ENCODE measurements at regions of chr17 and their contacts with region 1.

Region 1: GRCh38 chr17:8222630-8223356 is 12.4 kb upstream of the AURKB start:
- DNase-seq: peak; percentile 94
- H3K4me3 Mint-ChIP-seq: peak overlapping the region; percentile 98
- H3K27ac Mint-ChIP-seq: peak overlapping the region; percentile 98
- H3K4me1 Mint-ChIP-seq: peaks cover 47% of the 10 kb centered on the region
- H3K27me3 Mint-ChIP-seq: peaks cover 14% of the 10 kb centered on the region

Region 2: GRCh38 chr17:8156246-8156992 is 66.4 kb before region 1 on chr17:
- CTCF ChIA-PET with region 1: interaction called, 3 read pairs
- POLR2A ChIA-PET with region 1: interaction called, 6 read pairs
- intact Hi-C with region 1: loop called (anchors 2 kb)
- DNase-seq: peak; percentile 100
- H3K4me3 Mint-ChIP-seq: no peak overlapping the region
- H3K27ac Mint-ChIP-seq: no peak overlapping the region
- H3K4me1 Mint-ChIP-seq: peaks cover 56% of the 10 kb centered on the region
- H3K27me3 Mint-ChIP-seq: no peaks in the 10 kb centered on the region

Region 3: DNA sequence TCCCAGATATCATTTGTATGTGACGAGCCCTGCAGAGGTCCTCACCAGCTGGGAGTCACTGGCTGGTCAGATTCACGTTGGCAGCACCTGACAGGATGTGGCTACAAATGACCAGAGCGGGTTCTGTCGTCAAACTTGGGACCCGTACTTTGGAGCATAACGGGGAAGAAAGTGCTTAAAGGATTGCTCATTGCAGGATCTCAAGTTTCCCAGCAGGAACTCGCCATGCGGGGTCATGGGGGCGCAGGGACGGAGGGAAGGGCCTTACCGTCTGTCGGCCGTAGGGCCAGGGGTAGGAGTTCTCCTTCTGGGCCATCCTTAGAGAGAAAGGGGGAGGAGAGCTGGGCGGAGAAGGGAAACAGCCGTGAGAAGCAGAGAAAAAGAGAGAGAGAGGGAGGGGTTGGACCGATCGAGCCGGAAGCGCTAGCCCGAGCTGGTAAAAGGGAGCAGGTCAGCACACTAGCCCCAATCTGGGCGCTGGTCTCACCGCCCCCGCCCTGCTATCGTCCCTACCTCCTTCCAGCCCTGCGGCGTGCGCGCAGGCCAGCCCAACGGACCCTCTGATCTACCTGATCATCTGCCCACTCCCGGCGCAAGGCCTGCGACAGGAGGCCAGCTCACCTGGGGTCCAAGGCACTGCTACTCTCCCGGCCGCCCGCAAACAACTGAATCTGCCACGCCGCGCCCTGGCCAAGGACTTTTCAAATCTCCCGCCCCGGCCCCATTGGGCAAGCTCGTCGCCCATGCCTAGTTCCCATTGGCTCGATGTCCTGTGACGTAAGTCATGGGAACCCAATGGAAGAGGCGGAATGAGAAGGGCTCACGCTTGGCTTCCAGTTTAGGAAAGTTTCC is 12.7 kb before region 1 on chr17 and contains the start of gene AURKB:
- CTCF ChIA-PET with region 1: interaction called, 6 read pairs
- POLR2A ChIA-PET with region 1: interaction called, 40 read pairs
- intact Hi-C with region 1: loop called (anchors 1 kb)
- DNase-seq: peak; percentile 96
- H3K4me3 Mint-ChIP-seq: peak within 1 kb of the TSS; percentile 99
- H3K27ac Mint-ChIP-seq: peak within 1 kb of the TSS; percentile 97
- H3K4me1 Mint-ChIP-seq: peaks cover 23% of the 10 kb centered on the region
- H3K27me3 Mint-ChIP-seq: no peaks in the 10 kb centered on the region
- total RNA-seq, gene AURKB: 184 TPM

Region 4: GRCh38 chr17:8288336-8289102 is 65.7 kb after region 1 on chr17 and contains the start of gene RANGRF:
- CTCF ChIA-PET with region 1: no interaction called
- POLR2A ChIA-PET with region 1: interaction called, 3 read pairs
- intact Hi-C with region 1: loop called (anchors 2 kb)
- DNase-seq: peak; percentile 91
- H3K4me3 Mint-ChIP-seq: peak within 1 kb of the TSS; percentile 93
- H3K27ac Mint-ChIP-seq: peak within 1 kb of the TSS; percentile 95
- H3K4me1 Mint-ChIP-seq: peaks cover 31% of the 10 kb centered on the region
- H3K27me3 Mint-ChIP-seq: no peaks in the 10 kb centered on the region
- total RNA-seq, gene RANGRF: 41.7 to 45.5 TPM

Region 5: DNA sequence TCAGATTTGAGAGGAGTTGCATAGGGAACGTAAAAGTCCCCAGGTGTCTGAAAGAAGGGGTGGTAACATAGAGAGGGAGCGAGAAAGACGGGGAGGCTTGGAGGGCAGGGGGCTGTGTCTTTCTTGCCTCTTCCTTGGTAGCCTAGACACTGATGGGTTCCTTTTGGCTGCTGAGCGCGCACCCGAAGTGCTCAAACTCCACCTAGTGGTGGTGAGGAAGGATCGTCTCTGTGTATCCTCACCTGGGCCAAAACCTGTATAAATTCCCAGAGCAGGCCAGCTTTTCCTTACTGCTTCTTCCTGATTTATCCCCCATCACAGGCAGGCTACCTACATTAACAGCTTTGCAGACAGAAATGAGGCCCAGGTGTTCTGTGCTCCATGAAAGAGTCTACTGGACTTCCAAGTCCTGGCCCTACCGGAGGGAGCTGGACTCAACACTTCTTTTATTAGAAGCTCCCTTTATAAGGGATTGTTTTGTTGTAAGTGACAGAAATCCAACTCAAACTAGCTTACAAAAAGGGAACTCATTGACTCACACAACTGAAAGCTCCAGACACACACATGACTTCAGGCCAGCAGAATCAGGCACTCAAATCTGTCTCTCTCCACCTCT is 77.9 kb after region 1 on chr17:
- CTCF ChIA-PET with region 1: interaction called, 11 read pairs
- POLR2A ChIA-PET with region 1: interaction called, 8 read pairs
- intact Hi-C with region 1: loop called (anchors 1 kb)
- DNase-seq: peak; percentile 68
- H3K4me3 Mint-ChIP-seq: no peak overlapping the region
- H3K27ac Mint-ChIP-seq: no peak overlapping the region
- H3K4me1 Mint-ChIP-seq: peaks cover 9% of the 10 kb centered on the region
- H3K27me3 Mint-ChIP-seq: no peaks in the 10 kb centered on the region

Region 6: GRCh38 chr17:8345052-8345682 is 122.4 kb after region 1 on chr17:
- CTCF ChIA-PET with region 1: no interaction called
- POLR2A ChIA-PET with region 1: no interaction called
- intact Hi-C with region 1: no loop called
- DNase-seq: peak; percentile 16
- H3K4me3 Mint-ChIP-seq: no peak overlapping the region
- H3K27ac Mint-ChIP-seq: no peak overlapping the region
- H3K4me1 Mint-ChIP-seq: no peaks in the 10 kb centered on the region
- H3K27me3 Mint-ChIP-seq: peaks cover 20% of the 10 kb centered on the region

Measured in activated CD4-positive, alpha-beta memory T cell treated with anti-CD3 and anti-CD28 coated beads for 36 hours (primary cell).